ENCODE measurements at regions of chr2 and their contacts with region 1.

Region 1: GRCh38 chr2:160109936-160110673 is 47.7 kb upstream of the PLA2R1 start:
- DNase-seq: peak; percentile 71
- H3K4me3 ChIP-seq: no peak overlapping the region; a peak in 1 of 4 replicates
- H3K27ac ChIP-seq: peak overlapping the region in 1 of 2 experiments; percentile 58; a peak in 1 of 4 replicates
- H3K4me1 ChIP-seq: peaks cover 5 to 7% of the 10 kb centered on the region in 2 experiments; a peak in 2 of 4 replicates
- H3K27me3 ChIP-seq: no peaks in the 10 kb centered on the region
- CTCF ChIP-seq: peak; percentile 90
- EP300 ChIP-seq: peak in 1 of 2 experiments; percentile 44; a peak in 3 of 4 replicates
- RAD21 ChIP-seq: peak; percentile 99

Region 2: DNA sequence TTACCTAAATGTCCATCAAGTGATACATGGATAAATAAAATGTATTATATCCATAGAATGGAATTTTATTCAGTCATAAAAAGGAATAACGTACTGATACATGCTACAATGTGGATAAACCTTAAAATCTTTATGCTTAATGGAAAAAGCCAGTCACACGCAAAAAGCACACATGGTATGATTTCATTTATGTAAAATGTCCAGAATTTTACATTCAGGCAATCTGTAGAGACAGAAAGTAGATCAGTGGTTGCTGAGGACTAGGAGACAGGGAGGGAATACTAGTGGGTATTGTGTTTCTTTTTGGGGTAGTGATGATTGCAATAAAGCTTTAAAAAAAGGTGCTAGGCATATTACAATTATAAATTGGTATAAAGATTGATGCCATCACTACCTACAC is 281.4 kb before region 1 on chr2:
- CTCF ChIA-PET with region 1: no interaction called
- POLR2A ChIA-PET with region 1: no interaction called
- DNase-seq: no peak
- H3K4me3 ChIP-seq: no peak overlapping the region
- H3K27ac ChIP-seq: no peak overlapping the region
- H3K4me1 ChIP-seq: no peaks in the 10 kb centered on the region
- H3K27me3 ChIP-seq: no peaks in the 10 kb centered on the region; the same call in 1 of the 2 replicates
- CTCF ChIP-seq: no peak
- EP300 ChIP-seq: no peak
- RAD21 ChIP-seq: no peak

Region 3: GRCh38 chr2:160096409-160096808 is 13.7 kb before region 1 on chr2:
- CTCF ChIA-PET with region 1: interaction called, 19 read pairs
- POLR2A ChIA-PET with region 1: no interaction called
- DNase-seq: no peak
- H3K4me3 ChIP-seq: no peak overlapping the region
- H3K27ac ChIP-seq: no peak overlapping the region
- H3K4me1 ChIP-seq: no peaks in the 10 kb centered on the region
- H3K27me3 ChIP-seq: no peaks in the 10 kb centered on the region
- CTCF ChIP-seq: no peak
- EP300 ChIP-seq: no peak
- RAD21 ChIP-seq: no peak

Region 4: GRCh38 chr2:160252278-160252887 is 142.3 kb after region 1 on chr2:
- CTCF ChIA-PET with region 1: interaction called, 17 read pairs
- POLR2A ChIA-PET with region 1: no interaction called
- DNase-seq: peak; percentile 51
- H3K4me3 ChIP-seq: no peak overlapping the region
- H3K27ac ChIP-seq: no peak overlapping the region; a peak in 1 of 4 replicates
- H3K4me1 ChIP-seq: peaks cover 0 to 16% of the 10 kb centered on the region in 2 experiments; a peak in 2 of 4 replicates
- H3K27me3 ChIP-seq: no peaks in the 10 kb centered on the region
- CTCF ChIP-seq: peak; percentile 84
- EP300 ChIP-seq: no peak
- RAD21 ChIP-seq: peak; percentile 70

Region 5: DNA sequence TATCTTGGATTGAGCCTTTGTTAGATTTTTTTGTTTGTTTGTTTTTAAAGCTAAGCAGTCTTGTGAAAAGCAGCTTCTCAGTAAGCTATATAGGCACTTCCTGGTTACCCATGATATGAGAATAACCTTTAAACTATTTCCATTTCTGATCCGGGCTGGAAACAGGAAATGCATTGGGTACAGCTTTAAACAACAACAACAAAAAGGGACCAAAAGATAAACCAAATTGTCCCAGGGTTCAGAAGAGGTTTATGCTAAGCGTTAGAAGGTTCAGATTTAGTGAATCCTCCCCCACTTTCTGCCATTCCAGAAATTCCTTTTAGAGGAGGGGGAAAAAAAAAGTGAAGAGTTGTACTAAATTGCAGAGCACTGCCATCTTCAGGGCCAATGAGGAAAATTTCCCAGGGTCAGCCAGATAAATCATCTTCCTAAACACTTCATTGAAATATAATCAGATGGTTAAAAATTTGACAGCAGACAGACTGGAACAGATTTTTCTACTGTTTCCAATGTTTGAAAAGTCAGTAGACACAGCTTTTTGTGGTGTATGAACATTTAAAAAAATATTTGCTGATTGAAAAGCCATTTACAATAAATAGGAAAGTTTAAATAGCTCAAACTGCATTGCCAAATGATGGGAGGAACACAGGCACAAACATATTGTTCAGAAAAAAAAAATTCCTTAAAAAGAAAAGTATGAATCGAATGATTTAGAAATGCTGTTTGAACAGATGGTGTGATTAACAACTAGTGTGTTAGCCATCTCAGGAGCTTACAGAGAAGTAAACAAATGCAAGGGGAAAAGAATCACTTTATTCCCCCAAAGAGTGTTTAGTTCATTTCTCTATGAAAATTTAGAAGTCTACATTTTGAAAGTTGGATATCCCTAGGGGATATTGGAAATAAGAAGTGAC is 860.2 kb after region 1 on chr2:
- CTCF ChIA-PET with region 1: interaction called, 11 read pairs
- POLR2A ChIA-PET with region 1: no interaction called
- DNase-seq: peak; percentile 69
- H3K4me3 ChIP-seq: no peak overlapping the region
- H3K27ac ChIP-seq: peak overlapping the region; percentile 62 to 75; a peak in 3 of 4 replicates
- H3K4me1 ChIP-seq: peaks cover 0 to 6% of the 10 kb centered on the region in 2 experiments; a peak in 2 of 4 replicates
- H3K27me3 ChIP-seq: no peaks in the 10 kb centered on the region
- CTCF ChIP-seq: peak; percentile 87
- EP300 ChIP-seq: no peak
- RAD21 ChIP-seq: peak; percentile 93